ENCODE measurements at regions of chr6 and their contacts with region 1.

Region 1: GRCh38 chr6:158793432-158793831 is 25.7 kb downstream of the EZR start:
- DNase-seq: peak in 1 of 2 experiments; percentile 64
- H3K4me3 ChIP-seq: no peak overlapping the region
- H3K4me3 Mint-ChIP-seq: no peak overlapping the region
- H3K27ac Mint-ChIP-seq: no peak overlapping the region
- H3K4me1 ChIP-seq: peaks cover 29% of the 10 kb centered on the region
- H3K4me1 Mint-ChIP-seq: no peaks in the 10 kb centered on the region
- H3K27me3 ChIP-seq: no peaks in the 10 kb centered on the region
- H3K27me3 Mint-ChIP-seq: no peaks in the 10 kb centered on the region
- CTCF ChIP-seq: peak; percentile 45 to 50

Region 2: DNA sequence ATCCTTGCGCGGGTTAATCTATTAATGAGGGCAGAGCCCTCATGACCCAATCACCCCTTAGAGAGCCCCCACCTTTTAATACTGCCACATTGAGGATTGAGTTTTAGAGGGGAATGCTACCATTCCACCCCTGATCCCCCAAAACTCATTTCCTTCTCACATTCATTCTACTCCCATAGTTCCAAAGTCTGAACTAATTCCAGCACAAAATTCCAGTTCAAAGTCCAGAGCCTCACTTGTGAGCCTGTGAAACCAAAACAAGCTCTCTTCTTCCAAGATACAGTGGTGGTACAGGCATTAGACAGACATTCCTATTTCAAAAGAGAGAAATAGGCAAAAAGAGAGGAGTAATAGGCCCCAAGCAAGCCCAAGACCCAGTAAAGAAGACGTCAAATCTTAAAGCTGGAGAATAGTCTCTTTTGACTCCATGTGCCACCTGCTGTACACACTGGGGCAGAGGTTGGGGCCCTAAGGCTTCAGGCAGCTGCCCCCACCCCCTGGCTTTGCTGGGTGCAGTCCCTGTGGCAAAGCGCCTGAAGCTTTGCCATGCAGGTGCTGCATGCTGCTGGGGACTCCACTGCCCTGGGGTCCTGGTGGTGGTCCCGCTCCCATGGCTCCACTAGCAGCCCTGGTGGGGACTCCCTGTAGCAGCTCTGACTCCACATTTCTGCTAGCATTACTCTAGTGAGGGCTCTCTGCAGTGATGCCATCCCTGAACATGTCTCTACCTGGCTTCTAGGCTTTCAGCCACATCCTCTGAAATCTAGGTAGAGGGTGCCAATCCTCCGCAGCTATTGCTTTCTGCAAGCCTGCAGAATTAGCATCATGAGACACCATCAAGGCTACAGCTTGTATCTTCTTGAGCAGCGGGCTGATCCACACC is 165.3 kb after region 1 on chr6:
- CTCF ChIA-PET with region 1: interaction called, 4 read pairs
- POLR2A ChIA-PET with region 1: no interaction called
- intact Hi-C with region 1: loop called (anchors 1 kb)
- DNase-seq: peak in 1 of 2 experiments; percentile 32
- H3K4me3 ChIP-seq: no peak overlapping the region
- H3K4me3 Mint-ChIP-seq: peak overlapping the region; percentile 15
- H3K27ac Mint-ChIP-seq: peak overlapping the region; percentile 77
- H3K4me1 ChIP-seq: peaks cover 14% of the 10 kb centered on the region
- H3K4me1 Mint-ChIP-seq: peaks cover 7% of the 10 kb centered on the region
- H3K27me3 ChIP-seq: no peaks in the 10 kb centered on the region
- H3K27me3 Mint-ChIP-seq: no peaks in the 10 kb centered on the region
- CTCF ChIP-seq: peak in 1 of 2 experiments; percentile 15